ENCODE measurements at regions of chr1 and their contacts with region 1.

Region 1: GRCh38 chr1:15994590-15995351 is 9.3 kb upstream of the SRARP start:
- DNase-seq: peak; percentile 56
- ATAC-seq: peak; percentile 92
- H3K4me3 ChIP-seq: peak overlapping the region; percentile 31 to 54 (median 35); a peak in 4 of 6 replicates
- H3K27ac ChIP-seq: peak overlapping the region; percentile 23
- H3K4me1 ChIP-seq: peaks cover 40% of the 10 kb centered on the region
- H3K27me3 ChIP-seq: peaks cover 6 to 33% of the 10 kb centered on the region in 2 experiments; a peak in 4 of 5 replicates
- CTCF ChIP-seq: peak; percentile 95
- EP300 ChIP-seq: no peak
- POLR2A ChIP-seq: no peak
- RAD21 ChIP-seq: peak; percentile 90

Region 2: GRCh38 chr1:15810073-15810472 is 184.7 kb before region 1 on chr1:
- CTCF ChIA-PET with region 1: no interaction called
- POLR2A ChIA-PET with region 1: no interaction called
- in situ Hi-C with region 1: no loop called
- intact Hi-C with region 1: loop called (anchors 10 kb)
- DNase-seq: no peak
- ATAC-seq: no peak
- H3K4me3 ChIP-seq: no peak overlapping the region
- H3K27ac ChIP-seq: no peak overlapping the region
- H3K4me1 ChIP-seq: peaks cover 21% of the 10 kb centered on the region
- H3K27me3 ChIP-seq: 0 out of 5 replicates have a peak, but pooled peaks cover 0 to 3% of the 10 kb centered on the region in 2 experiments
- CTCF ChIP-seq: no peak
- EP300 ChIP-seq: no peak
- POLR2A ChIP-seq: no peak
- RAD21 ChIP-seq: no peak

Region 3: GRCh38 chr1:15957228-15958095 is 37.3 kb before region 1 on chr1:
- CTCF ChIA-PET with region 1: interaction called, 5 read pairs
- POLR2A ChIA-PET with region 1: no interaction called
- in situ Hi-C with region 1: no loop called
- intact Hi-C with region 1: loop called (anchors 2 kb)
- DNase-seq: no peak
- ATAC-seq: peak; percentile 84
- H3K4me3 ChIP-seq: no peak overlapping the region
- H3K27ac ChIP-seq: no peak overlapping the region
- H3K4me1 ChIP-seq: no peaks in the 10 kb centered on the region
- H3K27me3 ChIP-seq: no peaks in the 10 kb centered on the region
- CTCF ChIP-seq: peak; percentile 31
- EP300 ChIP-seq: no peak
- POLR2A ChIP-seq: no peak
- RAD21 ChIP-seq: peak; percentile 25; the same call in 1 of the 2 replicates

Measured in HepG2 (cell line).